Activated T-helper 1 cell treated with anti-CD3 and anti-CD28 coated beads, Interleukin-12 subunit alpha, Interleukin-12 subunit beta, Interleukin-2, Interleukin-4 antibody, amounts not matched to agents 30 ng/mL and 10 ng/mL and 1 ng/mL, durations not matched to agents 14 hours and 24 hours and 36 hours (primary cell): ENCODE measurements at regions of chr14 and their contacts with region 1.

Region 1: GRCh38 chr14:103546652-103547454 is 15.6 kb downstream of the BAG5 start:
- DNase-seq: peak; percentile 61
- H3K4me3 Mint-ChIP-seq: no peak overlapping the region
- H3K27ac Mint-ChIP-seq: no peak overlapping the region
- H3K4me1 Mint-ChIP-seq: no peaks in the 10 kb centered on the region
- H3K27me3 Mint-ChIP-seq: no peaks in the 10 kb centered on the region

Region 2: GRCh38 chr14:103500148-103500990 is 46.5 kb before region 1 on chr14:
- intact Hi-C with region 1: loop called (anchors 1 kb)
- DNase-seq: peak; percentile 57
- H3K4me3 Mint-ChIP-seq: no peak overlapping the region
- H3K27ac Mint-ChIP-seq: peak overlapping the region; percentile 16
- H3K4me1 Mint-ChIP-seq: peaks cover 9% of the 10 kb centered on the region
- H3K27me3 Mint-ChIP-seq: no peaks in the 10 kb centered on the region

Region 3: GRCh38 chr14:103520657-103521437 is 26.0 kb before region 1 on chr14:
- intact Hi-C with region 1: loop called (anchors 1 kb)
- DNase-seq: peak; percentile 54
- H3K4me3 Mint-ChIP-seq: peak overlapping the region; percentile 19
- H3K27ac Mint-ChIP-seq: no peak overlapping the region
- H3K4me1 Mint-ChIP-seq: peaks cover 6% of the 10 kb centered on the region
- H3K27me3 Mint-ChIP-seq: peaks cover 19% of the 10 kb centered on the region